ENCODE measurements at regions of chr16 and their contacts with region 1.

Region 1: DNA sequence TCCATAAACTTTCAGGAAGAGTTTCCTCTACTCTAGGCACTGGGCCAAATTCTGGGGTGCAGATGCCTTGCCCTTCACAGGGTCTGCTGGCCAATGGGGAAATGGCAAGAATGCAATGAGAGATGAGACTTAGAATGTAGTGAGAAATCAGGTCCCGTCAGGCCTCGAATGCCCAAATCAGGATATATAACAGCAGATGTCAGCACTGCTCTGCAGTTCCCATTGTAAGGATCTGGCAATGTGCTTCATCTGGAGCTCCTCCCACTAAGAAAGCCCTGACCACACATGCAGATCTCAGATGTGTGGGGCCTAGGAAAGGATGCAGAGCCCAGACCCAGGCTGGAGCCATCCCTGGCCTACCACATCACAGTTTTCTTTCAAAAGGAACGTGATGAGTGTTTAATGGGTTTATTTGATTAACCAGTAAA is 13.9 kb upstream of the LPCAT2 start:
- DNase-seq: peak; percentile 70
- H3K4me3 ChIP-seq: no peak overlapping the region
- H3K27ac ChIP-seq: no peak overlapping the region
- H3K4me1 ChIP-seq: peaks cover 32% of the 10 kb centered on the region
- H3K27me3 ChIP-seq: no peaks in the 10 kb centered on the region
- CTCF ChIP-seq: peak; percentile 53 to 71

Region 2: GRCh38 chr16:55444754-55445485 is 50.1 kb before region 1 on chr16:
- CTCF ChIA-PET with region 1: no interaction called
- dilution Hi-C with region 1: no loop called
- in situ Hi-C with region 1: no loop called
- intact Hi-C with region 1: no loop called
- DNase-seq: no peak
- H3K4me3 ChIP-seq: no peak overlapping the region
- H3K27ac ChIP-seq: no peak overlapping the region
- H3K4me1 ChIP-seq: no peaks in the 10 kb centered on the region
- H3K27me3 ChIP-seq: no peaks in the 10 kb centered on the region
- CTCF ChIP-seq: no peak

Region 3: GRCh38 chr16:55471448-55472097 is 23.4 kb before region 1 on chr16:
- CTCF ChIA-PET with region 1: no interaction called
- dilution Hi-C with region 1: no loop called
- in situ Hi-C with region 1: no loop called
- intact Hi-C with region 1: no loop called
- DNase-seq: peak; percentile 77
- H3K4me3 ChIP-seq: no peak overlapping the region
- H3K27ac ChIP-seq: peak overlapping the region; percentile 69
- H3K4me1 ChIP-seq: peaks cover 32% of the 10 kb centered on the region
- H3K27me3 ChIP-seq: no peaks in the 10 kb centered on the region
- CTCF ChIP-seq: no peak

Region 4: GRCh38 chr16:55543472-55543871 is 48.5 kb after region 1 on chr16:
- CTCF ChIA-PET with region 1: no interaction called
- dilution Hi-C with region 1: no loop called
- in situ Hi-C with region 1: no loop called
- intact Hi-C with region 1: loop called (anchors 1 kb)
- DNase-seq: no peak
- H3K4me3 ChIP-seq: no peak overlapping the region
- H3K27ac ChIP-seq: no peak overlapping the region
- H3K4me1 ChIP-seq: peaks cover 25% of the 10 kb centered on the region
- H3K27me3 ChIP-seq: no peaks in the 10 kb centered on the region
- CTCF ChIP-seq: peak; percentile 11 to 35

Region 5: DNA sequence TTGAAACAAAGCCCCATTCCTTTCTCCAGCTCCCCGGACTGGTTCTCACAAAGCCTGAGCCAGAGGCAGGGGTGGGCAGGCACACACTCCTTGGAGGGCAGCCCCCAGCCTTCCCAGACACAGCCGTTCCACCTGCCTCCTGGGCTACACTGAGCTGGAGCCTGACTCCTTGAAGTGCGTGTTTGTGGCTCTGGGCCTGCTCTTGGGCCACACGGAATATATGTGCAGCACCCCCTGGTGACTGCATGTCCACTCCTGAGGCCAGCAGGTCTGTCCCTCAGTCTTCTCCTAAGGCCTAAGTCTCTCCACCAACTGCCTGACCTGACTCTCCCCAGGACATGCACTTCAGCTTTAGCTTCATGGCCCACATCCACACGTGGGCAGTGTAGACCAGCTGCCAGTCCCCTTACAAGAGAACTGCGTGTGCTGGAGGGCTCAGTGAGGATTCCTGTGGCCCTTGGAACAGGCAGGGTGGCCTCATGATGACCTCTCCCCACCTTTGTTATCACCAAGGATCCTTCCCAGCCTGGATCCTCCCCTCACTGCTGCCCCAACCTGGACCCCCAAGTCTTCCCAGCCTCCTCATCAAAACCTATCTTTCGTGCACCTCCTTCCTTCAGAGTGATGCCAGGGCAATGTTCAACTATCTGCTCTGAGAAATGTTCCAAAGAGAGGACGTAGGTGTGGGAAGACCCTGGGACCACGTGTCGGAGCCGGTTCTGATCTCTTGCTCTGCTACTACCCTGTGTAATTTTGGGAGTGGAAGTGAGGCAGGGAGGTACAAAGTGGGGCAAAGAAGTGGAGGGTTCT is 148.4 kb after region 1 on chr16:
- CTCF ChIA-PET with region 1: no interaction called
- dilution Hi-C with region 1: no loop called
- in situ Hi-C with region 1: no loop called
- intact Hi-C with region 1: loop called (anchors 1 kb)
- DNase-seq: no peak
- H3K4me3 ChIP-seq: no peak overlapping the region
- H3K27ac ChIP-seq: no peak overlapping the region
- H3K4me1 ChIP-seq: no peaks in the 10 kb centered on the region
- H3K27me3 ChIP-seq: no peaks in the 10 kb centered on the region
- CTCF ChIP-seq: peak in 1 of 2 donors; percentile 19